Activated naive CD4-positive, alpha-beta T cell treated with anti-CD3 and anti-CD28 coated beads for 36 hours (primary cell): ENCODE measurements at regions of chr10 and their contacts with region 1.

Region 1: GRCh38 chr10:68406815-68407548 is at the start of gene RUFY2:
- DNase-seq: peak; percentile 73
- H3K4me3 Mint-ChIP-seq: peak within 1 kb of the TSS; percentile 89
- H3K27ac Mint-ChIP-seq: peak within 1 kb of the TSS; percentile 59
- H3K4me1 Mint-ChIP-seq: peaks cover 16% of the 10 kb centered on the region
- H3K27me3 Mint-ChIP-seq: no peaks in the 10 kb centered on the region
- total RNA-seq, gene RUFY2: 5.2 to 6.7 TPM

Region 2: DNA sequence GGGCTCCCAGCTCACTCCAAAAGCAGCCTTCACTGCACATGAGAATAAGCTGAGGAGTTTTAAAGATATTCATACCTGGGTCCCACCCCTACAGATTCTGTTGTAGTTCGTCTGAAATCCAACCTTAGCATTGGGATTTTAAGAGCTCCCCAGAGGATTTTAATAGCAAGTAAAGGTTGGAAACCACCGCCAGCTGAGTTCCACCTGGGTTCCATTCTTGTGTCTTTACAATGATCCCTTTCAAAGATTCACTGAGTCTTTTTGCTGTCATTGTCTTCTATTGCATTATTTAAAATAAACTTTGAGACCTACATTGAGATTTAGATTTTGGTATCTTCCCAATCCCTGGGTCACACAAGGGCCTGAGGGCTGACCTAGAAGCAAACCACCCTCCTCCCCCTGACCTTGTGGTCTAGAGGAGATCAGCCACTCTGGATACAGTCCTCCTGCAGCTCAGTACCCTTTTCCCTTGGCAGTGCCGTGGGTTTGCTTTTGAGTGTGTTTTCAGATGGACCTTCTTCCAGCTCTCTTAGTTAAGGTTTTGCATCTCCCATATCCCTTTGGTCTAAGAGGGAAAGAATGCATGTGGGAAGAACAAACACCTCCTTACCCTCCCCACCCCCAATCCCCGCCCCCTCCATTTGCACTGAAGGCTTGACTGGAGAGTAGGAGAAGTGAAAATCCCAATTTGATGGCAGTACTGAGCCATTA is 545.1 kb before region 1 on chr10:
- CTCF ChIA-PET with region 1: no interaction called
- intact Hi-C with region 1: loop called (anchors 5 kb)
- DNase-seq: no peak
- H3K4me3 Mint-ChIP-seq: no peak overlapping the region
- H3K27ac Mint-ChIP-seq: no peak overlapping the region
- H3K4me1 Mint-ChIP-seq: no peaks in the 10 kb centered on the region
- H3K27me3 Mint-ChIP-seq: no peaks in the 10 kb centered on the region

Region 3: DNA sequence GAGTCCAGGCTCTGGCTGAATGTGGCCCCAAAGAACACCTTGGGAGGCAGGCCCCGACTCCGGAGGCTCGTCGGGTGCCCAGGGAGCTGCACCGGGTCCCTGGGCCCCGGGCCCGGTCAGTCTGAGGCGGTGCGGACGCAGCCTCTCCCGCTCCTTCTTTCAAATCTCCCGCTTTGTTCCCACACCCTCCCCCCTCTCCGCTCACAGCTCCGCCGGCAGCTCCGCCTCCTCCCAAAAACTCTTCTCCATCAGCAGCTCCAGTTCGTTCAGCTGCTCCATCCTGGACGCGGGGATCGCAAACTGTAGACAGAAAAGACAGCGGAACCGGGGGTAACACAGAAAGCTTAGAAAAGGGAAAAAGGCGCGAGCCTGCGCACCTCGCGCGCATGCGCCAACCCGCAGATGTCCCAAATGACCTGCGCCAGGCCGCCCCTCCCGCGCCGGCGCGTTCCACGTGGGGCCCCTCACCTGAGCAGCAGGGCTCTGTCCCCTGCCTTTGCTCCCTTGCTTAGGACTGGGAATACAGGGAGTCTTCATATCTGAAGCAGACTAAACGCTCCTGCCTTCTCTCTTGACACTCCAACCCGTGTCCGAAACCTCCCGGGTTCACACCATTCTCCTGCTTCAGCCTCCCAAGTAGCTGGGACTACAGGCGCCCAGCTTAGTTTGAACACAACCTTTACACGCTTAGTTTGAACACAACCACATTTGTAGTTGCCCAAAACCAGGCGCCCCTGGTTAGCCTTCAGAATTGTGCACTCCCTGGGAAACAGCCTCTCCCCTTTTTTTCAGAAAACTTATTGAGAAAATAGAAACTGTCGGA is 64.8 kb after region 1 on chr10 and contains the start of gene DNA2:
- CTCF ChIA-PET with region 1: interaction called, 5 read pairs
- intact Hi-C with region 1: loop called (anchors 1 kb)
- DNase-seq: peak; percentile 81
- H3K4me3 Mint-ChIP-seq: peak within 1 kb of the TSS; percentile 96
- H3K27ac Mint-ChIP-seq: peak within 1 kb of the TSS; percentile 90
- H3K4me1 Mint-ChIP-seq: peaks cover 20% of the 10 kb centered on the region
- H3K27me3 Mint-ChIP-seq: no peaks in the 10 kb centered on the region
- total RNA-seq, gene DNA2: 50.2 to 51.4 TPM

Region 4: DNA sequence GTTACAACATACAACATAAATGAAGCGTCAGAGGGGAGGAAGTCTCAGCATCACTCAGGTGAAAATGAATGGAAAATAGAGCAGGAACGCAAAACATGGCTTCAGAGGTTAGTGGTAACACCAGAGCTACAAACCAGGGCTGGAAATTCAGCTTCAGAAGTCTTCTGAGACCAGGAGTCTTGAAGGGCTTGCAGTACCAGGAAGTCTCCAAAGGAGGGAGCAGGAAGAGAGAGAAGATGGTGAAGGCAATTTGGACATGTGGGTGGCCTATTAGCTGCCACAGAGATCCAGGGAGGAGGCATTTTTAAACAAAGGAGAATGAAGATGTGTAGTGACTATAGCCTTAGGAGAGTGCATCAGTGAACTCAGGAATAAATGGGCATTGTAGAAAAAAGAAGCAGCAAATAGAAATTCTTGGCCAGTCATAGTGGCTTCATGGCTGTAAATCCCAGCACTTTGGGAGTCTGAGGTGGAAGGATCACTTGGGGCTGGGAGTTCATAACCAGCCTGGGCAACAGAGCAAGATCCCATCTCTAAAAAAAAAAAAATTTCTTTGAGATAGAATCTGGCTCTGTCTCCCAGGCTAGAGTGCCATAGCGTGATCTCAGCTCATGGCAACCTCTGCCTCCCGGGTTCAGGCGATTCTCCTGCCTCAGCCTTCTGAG is 143.9 kb after region 1 on chr10:
- CTCF ChIA-PET with region 1: no interaction called
- intact Hi-C with region 1: no loop called
- DNase-seq: peak; percentile 69
- H3K4me3 Mint-ChIP-seq: no peak overlapping the region
- H3K27ac Mint-ChIP-seq: no peak overlapping the region
- H3K4me1 Mint-ChIP-seq: no peaks in the 10 kb centered on the region
- H3K27me3 Mint-ChIP-seq: no peaks in the 10 kb centered on the region

Region 5: DNA sequence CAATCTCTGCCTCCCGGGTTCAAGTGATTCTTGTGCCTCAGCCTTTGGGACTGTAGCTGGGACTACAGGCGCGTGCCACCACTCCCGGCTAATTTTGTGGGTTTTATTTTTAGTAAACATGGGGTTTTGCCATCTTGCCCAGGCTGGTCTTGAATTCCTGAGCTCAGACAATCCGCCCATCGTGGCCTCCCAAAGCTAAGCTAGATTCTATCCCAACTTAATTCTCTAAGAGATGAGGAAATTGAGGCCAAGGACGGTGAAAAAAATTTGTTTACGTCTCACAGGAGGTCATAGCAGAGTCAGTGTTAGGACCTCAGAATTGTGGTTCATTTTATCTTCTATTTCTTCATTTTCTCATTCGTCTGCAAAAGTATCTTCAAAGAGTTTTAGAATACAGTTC is 320.2 kb after region 1 on chr10:
- CTCF ChIA-PET with region 1: no interaction called
- intact Hi-C with region 1: loop called (anchors 2 kb)
- DNase-seq: no peak
- H3K4me3 Mint-ChIP-seq: no peak overlapping the region
- H3K27ac Mint-ChIP-seq: no peak overlapping the region
- H3K4me1 Mint-ChIP-seq: peaks cover 16% of the 10 kb centered on the region
- H3K27me3 Mint-ChIP-seq: no peaks in the 10 kb centered on the region